OCI-LY7 (cell line): ENCODE measurements at regions of chr2 and their contacts with region 1.

Region 1: DNA sequence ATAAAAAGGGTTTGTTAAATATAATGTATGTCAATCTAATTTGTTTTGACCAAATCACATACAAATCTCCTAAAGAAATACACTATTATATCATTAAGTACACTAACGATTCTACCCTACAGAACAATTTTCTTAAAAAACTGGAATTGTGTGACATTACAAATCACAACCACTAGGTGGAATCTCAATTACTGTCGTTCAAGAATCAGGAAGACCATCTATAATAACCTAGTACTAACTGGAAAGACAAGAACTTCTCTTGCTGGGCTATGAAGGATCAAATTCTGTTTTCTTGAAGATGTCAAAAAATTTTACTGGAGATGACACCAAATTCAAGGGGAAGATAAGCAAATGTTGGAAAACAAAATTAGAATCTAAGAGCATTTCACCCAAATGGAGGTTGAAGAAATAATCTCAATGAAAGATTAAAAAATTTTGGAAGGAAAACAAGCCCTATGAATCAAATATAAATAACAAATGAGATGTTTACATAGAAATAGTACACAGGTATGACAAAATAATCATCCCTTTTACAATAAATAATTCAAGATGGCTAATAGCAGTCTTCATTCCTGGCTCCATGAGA is 110.9 kb downstream of the STK39 start:
- DNase-seq: peak; percentile 53
- H3K4me3 ChIP-seq: no peak overlapping the region
- H3K27ac ChIP-seq: no peak overlapping the region
- H3K4me1 ChIP-seq: peaks cover 19% of the 10 kb centered on the region
- CTCF ChIP-seq: peak; percentile 80

Region 2: GRCh38 chr2:167987558-167987957 is 148.9 kb before region 1 on chr2:
- CTCF ChIA-PET with region 1: no interaction called
- POLR2A ChIA-PET with region 1: no interaction called
- intact Hi-C with region 1: no loop called
- DNase-seq: no peak
- H3K4me3 ChIP-seq: no peak overlapping the region
- H3K27ac ChIP-seq: no peak overlapping the region
- H3K4me1 ChIP-seq: no peaks in the 10 kb centered on the region
- CTCF ChIP-seq: no peak

Region 3: DNA sequence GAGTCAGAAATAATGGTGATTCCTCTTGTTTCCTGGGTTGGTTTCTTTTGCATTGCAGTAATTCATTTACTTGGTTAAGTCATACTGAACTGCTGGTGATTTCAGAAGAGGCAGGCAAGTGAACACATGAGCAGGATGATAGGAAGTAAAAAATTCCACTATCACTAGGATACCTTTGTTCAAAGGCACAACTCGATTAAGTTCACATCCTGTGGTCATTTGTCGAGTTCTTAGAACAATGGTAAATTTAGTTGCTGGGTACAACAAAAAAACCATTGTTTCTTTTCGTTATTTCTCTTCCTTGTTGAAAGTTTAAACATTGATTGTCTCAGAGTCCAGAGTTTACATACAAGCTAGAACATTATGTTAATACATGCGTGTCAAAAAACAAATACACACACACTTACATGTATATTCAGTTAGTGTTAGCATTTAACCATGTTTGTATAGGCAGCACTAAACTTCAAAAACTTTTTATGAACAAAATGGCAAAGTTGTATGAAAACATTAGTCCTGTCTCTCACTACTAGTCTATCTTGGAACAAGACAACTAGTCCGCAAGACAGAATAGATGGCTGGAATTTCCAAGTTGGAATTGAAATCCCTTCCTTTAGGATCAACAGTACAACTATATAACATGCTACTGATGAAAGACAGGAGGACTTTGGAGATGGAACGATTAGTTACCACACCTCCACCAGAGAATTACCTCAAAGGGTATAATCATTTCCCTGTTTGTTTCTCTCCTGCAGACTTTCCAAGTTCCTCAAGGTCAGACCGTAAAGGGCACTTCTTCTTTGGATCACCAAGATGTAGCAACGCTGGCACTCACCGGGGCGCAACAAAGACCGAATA is 84.7 kb after region 1 on chr2:
- CTCF ChIA-PET with region 1: no interaction called
- POLR2A ChIA-PET with region 1: no interaction called
- intact Hi-C with region 1: no loop called
- DNase-seq: no peak
- H3K4me3 ChIP-seq: no peak overlapping the region
- H3K27ac ChIP-seq: no peak overlapping the region
- H3K4me1 ChIP-seq: no peaks in the 10 kb centered on the region
- CTCF ChIP-seq: no peak

Region 4: DNA sequence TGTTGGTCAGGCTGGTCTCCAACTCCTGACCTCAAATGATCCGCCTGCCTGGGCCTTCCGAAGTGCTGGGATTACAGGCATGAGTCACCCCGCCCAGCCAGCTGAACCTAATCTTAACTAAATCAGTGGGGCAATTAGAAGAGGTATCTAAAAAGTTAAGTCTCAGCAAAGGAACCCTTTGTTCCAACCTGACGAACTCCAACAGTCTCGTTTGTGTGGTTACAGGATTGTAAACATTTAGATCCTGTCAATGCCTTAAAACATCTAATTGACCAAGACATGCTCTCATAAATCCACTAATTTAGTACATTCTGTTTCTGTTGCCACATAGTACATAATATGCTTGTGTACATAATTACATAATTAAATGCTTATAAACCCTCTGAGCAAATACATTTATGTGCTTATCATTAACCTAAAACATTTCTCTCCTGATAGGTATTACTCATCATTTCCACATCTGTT is 142.0 kb after region 1 on chr2:
- CTCF ChIA-PET with region 1: no interaction called
- POLR2A ChIA-PET with region 1: no interaction called
- intact Hi-C with region 1: no loop called
- DNase-seq: no peak
- H3K4me3 ChIP-seq: no peak overlapping the region
- H3K27ac ChIP-seq: no peak overlapping the region
- H3K4me1 ChIP-seq: no peaks in the 10 kb centered on the region
- CTCF ChIP-seq: no peak

Region 5: DNA sequence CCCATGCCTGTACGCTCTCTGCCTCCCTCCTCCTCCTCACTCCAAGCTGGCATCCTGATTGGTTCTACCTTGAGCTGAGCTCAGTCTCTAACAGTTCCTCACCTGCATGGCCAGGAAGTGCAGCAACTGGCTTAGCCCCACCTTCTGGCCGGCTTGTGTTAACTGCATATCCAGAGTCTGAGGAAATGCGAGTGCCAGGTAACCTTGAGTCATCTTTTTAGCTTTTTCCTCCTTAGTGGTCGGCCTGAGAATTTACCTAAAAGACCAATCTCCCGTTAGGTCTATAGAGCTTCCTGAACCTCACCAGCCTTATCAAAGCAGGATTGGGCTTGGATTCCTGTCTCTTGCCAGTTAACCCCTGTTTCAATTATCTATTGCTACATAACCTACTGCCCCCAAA is 200.4 kb after region 1 on chr2:
- CTCF ChIA-PET with region 1: no interaction called
- POLR2A ChIA-PET with region 1: no interaction called
- intact Hi-C with region 1: loop called (anchors 5 kb)
- DNase-seq: peak; percentile 49
- H3K4me3 ChIP-seq: no peak overlapping the region
- H3K27ac ChIP-seq: no peak overlapping the region
- H3K4me1 ChIP-seq: no peaks in the 10 kb centered on the region
- CTCF ChIP-seq: peak; percentile 73

Region 6: DNA sequence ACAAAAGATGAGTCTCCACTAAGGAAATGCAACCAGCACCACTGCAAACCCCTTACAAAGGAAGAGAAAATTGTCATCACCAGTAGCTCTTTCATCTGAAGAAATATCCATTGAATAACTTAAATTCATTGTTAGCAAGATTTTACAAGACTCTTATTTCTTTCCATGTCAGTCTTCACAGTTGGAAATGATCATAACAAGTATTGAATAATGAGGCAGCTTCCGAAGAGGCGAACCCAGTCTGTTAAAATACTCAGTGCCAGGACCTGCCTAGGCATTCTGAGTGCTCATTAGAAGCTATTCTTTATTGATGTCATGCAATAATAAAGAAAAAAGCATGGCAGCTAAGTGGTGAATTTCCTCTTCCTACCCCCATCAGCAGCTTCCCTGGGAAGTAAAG is 699.5 kb after region 1 on chr2:
- CTCF ChIA-PET with region 1: no interaction called
- POLR2A ChIA-PET with region 1: no interaction called
- intact Hi-C with region 1: no loop called
- DNase-seq: no peak
- H3K4me3 ChIP-seq: no peak overlapping the region
- H3K27ac ChIP-seq: no peak overlapping the region
- H3K4me1 ChIP-seq: no peaks in the 10 kb centered on the region
- CTCF ChIP-seq: no peak